Ovary (tissue), 10 donors: ENCODE measurements at regions of chr16 and their contacts with region 1.

Region 1: GRCh38 chr16:47141773-47142485 is 1.8 kb downstream of the NETO2 start:
- DNase-seq: peak; percentile 58 to 78 (median 66)
- H3K4me3 ChIP-seq: peak overlapping the region; percentile 25
- H3K27ac ChIP-seq: no peak overlapping the region
- H3K4me1 ChIP-seq: peaks cover 1% of the 10 kb centered on the region
- H3K27me3 ChIP-seq: no peaks in the 10 kb centered on the region
- CTCF ChIP-seq: peak; percentile 57 to 61 (median 60)
- EP300 ChIP-seq: no peak
- POLR2A ChIP-seq: no peak

Region 2: GRCh38 chr16:46908540-46909372 is 233.2 kb before region 1 on chr16:
- intact Hi-C with region 1: no loop called
- DNase-seq: peak; percentile 41 to 66 (median 56)
- H3K4me3 ChIP-seq: no peak overlapping the region
- H3K27ac ChIP-seq: no peak overlapping the region
- H3K4me1 ChIP-seq: no peaks in the 10 kb centered on the region
- H3K27me3 ChIP-seq: no peaks in the 10 kb centered on the region
- CTCF ChIP-seq: peak; percentile 43 to 60 (median 55)
- EP300 ChIP-seq: no peak
- POLR2A ChIP-seq: no peak

Region 3: DNA sequence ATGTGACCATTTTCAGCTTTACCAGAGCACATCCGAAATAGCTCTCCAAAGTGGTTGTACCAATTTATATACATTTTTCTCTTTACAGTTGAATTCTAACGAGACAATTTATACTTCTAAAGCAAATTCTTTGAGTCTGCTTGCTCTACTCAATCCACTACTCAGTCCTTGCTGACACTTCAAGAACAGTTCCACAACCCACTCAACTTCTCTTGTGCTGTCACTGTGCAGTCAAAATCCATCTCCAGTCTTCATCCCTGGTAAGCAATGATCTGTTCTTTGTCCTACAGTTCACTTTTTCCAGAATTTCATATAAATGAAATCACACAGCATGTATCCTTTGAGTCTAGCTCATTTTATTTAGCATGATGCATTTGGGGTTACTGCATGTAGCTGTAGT is 28.8 kb before region 1 on chr16:
- intact Hi-C with region 1: loop called in 1 of 4 experiments (anchors 2 kb)
- DNase-seq: no peak
- H3K4me3 ChIP-seq: no peak overlapping the region
- H3K27ac ChIP-seq: no peak overlapping the region
- H3K4me1 ChIP-seq: no peaks in the 10 kb centered on the region
- H3K27me3 ChIP-seq: no peaks in the 10 kb centered on the region
- CTCF ChIP-seq: no peak
- EP300 ChIP-seq: no peak
- POLR2A ChIP-seq: no peak

Region 4: DNA sequence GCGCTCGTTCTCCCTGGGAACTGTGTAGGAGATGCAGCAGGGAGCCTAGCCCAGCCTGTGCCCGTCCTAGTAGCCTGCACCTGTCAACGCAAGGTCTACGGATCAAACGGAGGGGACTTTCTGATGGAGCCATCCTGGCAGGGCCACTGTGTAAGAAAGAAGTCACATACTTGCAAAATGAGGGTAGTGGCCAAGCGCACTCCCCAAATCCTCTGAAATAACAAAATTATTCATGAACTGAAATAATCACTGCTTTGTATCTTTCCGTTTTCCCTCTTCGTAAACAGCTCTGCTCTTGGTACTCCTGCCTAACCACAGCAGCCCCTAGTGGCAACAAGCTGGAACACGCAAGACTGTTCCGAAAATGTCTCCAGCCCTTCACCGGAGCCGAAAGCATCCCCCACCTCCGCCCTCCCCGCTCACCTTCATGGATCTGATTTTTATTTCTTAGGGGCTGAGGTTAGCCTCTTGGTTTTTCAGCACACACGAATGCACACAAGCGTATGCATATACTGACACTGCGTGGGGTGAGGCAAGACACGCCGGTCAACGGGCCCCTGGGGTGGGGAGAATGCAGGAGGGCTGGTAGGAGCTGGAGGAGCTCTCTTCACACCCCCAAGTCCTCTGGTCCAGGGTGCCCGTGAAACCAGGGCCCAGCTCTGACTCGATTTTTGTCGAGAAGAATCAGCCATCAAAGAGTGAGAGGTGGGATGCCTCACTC is 913.1 kb after region 1 on chr16:
- intact Hi-C with region 1: loop called in 1 of 4 experiments (anchors 10 kb)
- DNase-seq: peak; percentile 20 to 52 (median 33)
- H3K4me3 ChIP-seq: no peak overlapping the region
- H3K27ac ChIP-seq: no peak overlapping the region
- H3K4me1 ChIP-seq: peaks cover 8% of the 10 kb centered on the region
- H3K27me3 ChIP-seq: no peaks in the 10 kb centered on the region
- CTCF ChIP-seq: peak; percentile 12 to 51 (median 19)
- EP300 ChIP-seq: no peak
- POLR2A ChIP-seq: no peak